ENCODE measurements at regions of chrX and their contacts with region 1.

Region 1: GRCh38 chrX:20664774-20665173 is 398.1 kb upstream of the RPS6KA3 start:
- DNase-seq: no peak
- H3K4me3 ChIP-seq: no peak overlapping the region
- H3K27ac ChIP-seq: no peak overlapping the region
- H3K4me1 ChIP-seq: no peaks in the 10 kb centered on the region
- H3K27me3 ChIP-seq: peaks cover 0 to 25% of the 10 kb centered on the region in 2 donors
- CTCF ChIP-seq: no peak
- POLR2A ChIP-seq: no peak

Region 2: GRCh38 chrX:20481632-20482031 is 183.1 kb before region 1 on chrX:
- intact Hi-C with region 1: loop called (anchors 5 kb)
- DNase-seq: no peak
- H3K4me3 ChIP-seq: no peak overlapping the region
- H3K27ac ChIP-seq: no peak overlapping the region
- H3K4me1 ChIP-seq: no peaks in the 10 kb centered on the region
- H3K27me3 ChIP-seq: peaks cover 0 to 20% of the 10 kb centered on the region in 2 donors
- CTCF ChIP-seq: no peak
- POLR2A ChIP-seq: no peak

Measured in breast epithelium (tissue), 4 donors.